ENCODE measurements at regions of chr18 and their contacts with region 1.

Region 1: DNA sequence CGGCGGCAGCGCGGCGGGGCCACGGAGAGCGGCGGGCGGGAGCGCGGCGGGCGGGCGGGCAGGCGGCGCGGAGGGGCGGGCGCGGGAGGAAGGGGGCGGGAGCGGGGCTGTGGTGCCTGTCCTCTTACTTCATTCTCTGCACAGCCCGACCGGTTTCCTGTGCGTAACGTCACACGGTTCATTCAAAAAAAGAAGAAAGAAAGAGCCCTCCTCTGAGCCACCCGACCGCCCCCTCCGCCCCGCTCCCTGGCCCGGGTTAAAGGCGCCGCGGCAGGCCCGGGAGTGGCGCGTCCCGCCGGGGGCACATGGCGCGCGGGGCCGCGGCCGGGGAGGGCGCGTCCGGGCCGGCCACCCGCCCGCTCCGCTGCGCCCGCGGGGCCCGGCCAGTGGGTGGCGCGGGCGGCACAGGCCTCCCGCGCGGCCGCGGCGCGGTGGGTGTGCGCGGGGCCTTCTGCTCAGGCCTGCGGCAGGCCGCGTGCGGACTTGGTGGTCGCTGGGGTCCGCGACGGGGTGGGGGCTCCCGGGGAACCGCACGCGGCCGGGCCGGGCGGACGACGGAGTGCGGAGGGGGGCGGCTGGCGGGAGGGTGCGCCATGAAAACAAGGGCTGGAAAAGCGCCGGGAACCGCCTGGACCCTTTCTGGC is 599 bp upstream of the BCL2 start:
- DNase-seq: peak; percentile 93
- ATAC-seq: peak; percentile 75
- H3K4me3 ChIP-seq: peak overlapping the region in 4 of 5 experiments; percentile 51 to 98 (median 88)
- H3K4me3 Mint-ChIP-seq: peak overlapping the region; percentile 95
- H3K27ac ChIP-seq: peak overlapping the region; percentile 52 to 92
- H3K27ac Mint-ChIP-seq: peak overlapping the region; percentile 96
- H3K4me1 ChIP-seq: peaks cover 18 to 34% of the 10 kb centered on the region in 2 donors
- H3K4me1 Mint-ChIP-seq: peaks cover 44% of the 10 kb centered on the region
- H3K27me3 ChIP-seq: no peaks in the 10 kb centered on the region
- H3K27me3 Mint-ChIP-seq: no peaks in the 10 kb centered on the region
- CTCF ChIP-seq: no peak

Region 2: GRCh38 chr18:62186774-62187542 is 1133.2 kb before region 1 on chr18 and contains the starts of genes PIGN and RELCH:
- CTCF ChIA-PET with region 1: no interaction called
- POLR2A ChIA-PET with region 1: no interaction called
- intact Hi-C with region 1: loop called (anchors 2 kb)
- DNase-seq: peak; percentile 98
- ATAC-seq: peak; percentile 95
- H3K4me3 ChIP-seq: peak within 1 kb of the TSS; percentile 87 to 100 (median 97)
- H3K4me3 Mint-ChIP-seq: peak within 1 kb of the TSS; percentile 98
- H3K27ac ChIP-seq: peak within 1 kb of the TSS; percentile 73
- H3K27ac Mint-ChIP-seq: peak within 1 kb of the TSS; percentile 96
- H3K4me1 ChIP-seq: peaks cover 30 to 37% of the 10 kb centered on the region in 2 donors
- H3K4me1 Mint-ChIP-seq: peaks cover 61% of the 10 kb centered on the region
- H3K27me3 ChIP-seq: no peaks in the 10 kb centered on the region
- H3K27me3 Mint-ChIP-seq: no peaks in the 10 kb centered on the region
- CTCF ChIP-seq: no peak
- total RNA-seq, gene PIGN: 37.3 and 43.8 TPM in 2 replicates
- total RNA-seq, gene RELCH: 76.0 and 77.9 TPM in 2 replicates

Region 3: DNA sequence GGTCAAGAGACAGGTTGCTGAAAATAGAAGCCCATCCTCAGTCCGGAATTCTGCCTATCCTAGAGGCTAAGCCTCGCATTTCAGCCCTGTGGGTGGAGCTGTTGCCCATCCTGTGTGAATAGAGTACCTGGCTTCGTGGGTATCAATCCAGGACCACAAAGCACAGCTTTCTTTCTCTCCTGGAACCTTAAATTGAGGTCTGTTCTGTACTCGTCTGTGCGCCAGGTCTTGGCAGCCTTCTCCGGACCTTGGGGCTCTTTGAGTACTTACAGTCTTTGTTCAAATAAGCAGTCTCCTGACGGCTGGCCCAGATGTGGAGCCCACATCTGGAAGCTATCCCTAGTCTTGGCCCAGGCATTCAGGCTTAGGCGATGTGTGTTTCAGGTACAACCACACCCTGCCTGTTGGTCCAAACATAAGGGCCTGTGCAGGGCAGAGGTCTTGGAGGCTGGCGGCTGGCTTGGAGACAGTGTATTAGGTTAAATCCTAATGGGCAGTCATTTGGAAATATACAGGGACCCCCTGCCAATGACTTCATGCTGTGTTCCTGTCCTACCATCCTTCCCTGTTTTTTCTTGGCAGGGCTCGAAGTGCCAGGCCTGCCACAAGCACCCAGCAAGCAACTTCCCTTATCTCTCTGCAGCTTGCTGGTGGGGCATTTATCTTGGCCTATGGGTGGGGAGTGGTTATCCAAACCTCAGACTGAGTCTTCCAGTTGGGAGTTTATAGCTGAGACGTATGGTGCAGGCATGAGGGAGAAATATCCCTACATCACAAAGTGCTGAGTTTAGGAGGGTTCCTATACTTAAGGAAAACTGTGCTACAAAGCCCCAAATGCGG is 294.7 kb before region 1 on chr18:
- CTCF ChIA-PET with region 1: interaction called, 26 read pairs
- POLR2A ChIA-PET with region 1: no interaction called
- intact Hi-C with region 1: no loop called
- DNase-seq: no peak
- ATAC-seq: no peak
- H3K4me3 ChIP-seq: no peak overlapping the region
- H3K4me3 Mint-ChIP-seq: no peak overlapping the region
- H3K27ac ChIP-seq: no peak overlapping the region
- H3K27ac Mint-ChIP-seq: no peak overlapping the region
- H3K4me1 ChIP-seq: peaks cover 3 to 11% of the 10 kb centered on the region in 2 donors
- H3K4me1 Mint-ChIP-seq: peaks cover 9% of the 10 kb centered on the region
- H3K27me3 ChIP-seq: no peaks in the 10 kb centered on the region
- H3K27me3 Mint-ChIP-seq: no peaks in the 10 kb centered on the region
- CTCF ChIP-seq: no peak

Region 4: DNA sequence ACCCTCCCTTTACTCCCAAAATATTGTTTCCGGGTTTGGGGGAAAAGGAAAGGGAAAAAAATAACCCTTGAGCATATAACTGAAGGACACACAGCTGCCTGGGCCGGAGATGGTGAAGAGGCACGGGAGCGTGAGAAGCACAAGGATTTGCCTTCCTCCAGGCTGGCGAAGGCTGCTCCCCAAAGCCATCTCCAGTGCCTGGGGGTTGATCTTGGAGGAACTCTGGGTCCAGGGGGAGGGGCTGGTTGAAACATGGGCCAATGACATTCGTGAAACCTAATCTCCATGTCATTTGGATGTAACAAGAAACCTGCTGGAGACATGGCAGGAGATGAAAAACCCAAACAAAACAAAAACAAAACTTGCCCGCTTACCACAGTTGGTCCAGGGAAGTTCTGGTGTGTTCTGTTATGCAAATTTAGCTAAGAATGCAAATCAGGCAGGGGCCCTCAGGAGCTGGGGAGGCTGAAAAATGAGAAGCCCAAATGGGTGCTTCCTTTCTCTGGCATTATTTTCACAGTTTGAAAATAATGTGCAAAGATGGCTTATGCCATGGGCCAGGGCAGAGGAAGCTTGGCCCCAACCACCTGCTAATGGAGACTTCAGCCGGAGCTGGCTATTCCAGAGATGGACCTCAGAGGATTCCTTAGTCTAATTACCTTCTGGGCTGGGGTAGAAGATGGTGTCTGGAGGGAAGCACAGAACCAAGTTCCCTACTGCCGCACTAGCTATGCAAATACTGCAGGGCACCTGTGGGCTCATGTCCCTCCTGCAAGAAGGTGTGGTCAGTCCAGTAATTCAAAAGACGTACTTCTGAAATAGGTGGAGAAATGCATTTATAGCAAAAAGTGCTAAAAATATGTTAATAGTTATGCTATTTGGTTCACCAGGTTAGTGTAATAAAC is 181.5 kb before region 1 on chr18:
- CTCF ChIA-PET with region 1: interaction called, 165 read pairs
- POLR2A ChIA-PET with region 1: interaction called, 6 read pairs
- intact Hi-C with region 1: loop called (anchors 1 kb)
- DNase-seq: peak; percentile 80
- ATAC-seq: peak; percentile 57
- H3K4me3 ChIP-seq: peak overlapping the region; percentile 27 to 67 (median 56)
- H3K4me3 Mint-ChIP-seq: peak overlapping the region; percentile 95
- H3K27ac ChIP-seq: peak overlapping the region; percentile 73 to 84
- H3K27ac Mint-ChIP-seq: peak overlapping the region; percentile 98
- H3K4me1 ChIP-seq: peaks cover 63 to 67% of the 10 kb centered on the region in 2 donors
- H3K4me1 Mint-ChIP-seq: peaks cover 84% of the 10 kb centered on the region
- H3K27me3 ChIP-seq: no peaks in the 10 kb centered on the region
- H3K27me3 Mint-ChIP-seq: no peaks in the 10 kb centered on the region
- CTCF ChIP-seq: no peak

Region 5: GRCh38 chr18:63207143-63207790 is 112.9 kb before region 1 on chr18:
- CTCF ChIA-PET with region 1: interaction called, 27 read pairs
- POLR2A ChIA-PET with region 1: no interaction called
- intact Hi-C with region 1: loop called (anchors 5 kb)
- DNase-seq: peak; percentile 44
- ATAC-seq: peak; percentile 55
- H3K4me3 ChIP-seq: peak overlapping the region in 2 of 5 experiments; percentile 15 to 31
- H3K4me3 Mint-ChIP-seq: peak overlapping the region; percentile 75
- H3K27ac ChIP-seq: peak overlapping the region; percentile 26 to 52
- H3K27ac Mint-ChIP-seq: peak overlapping the region; percentile 79
- H3K4me1 ChIP-seq: peaks cover 57 to 58% of the 10 kb centered on the region in 2 donors
- H3K4me1 Mint-ChIP-seq: peaks cover 80% of the 10 kb centered on the region
- H3K27me3 ChIP-seq: no peaks in the 10 kb centered on the region
- H3K27me3 Mint-ChIP-seq: no peaks in the 10 kb centered on the region
- CTCF ChIP-seq: no peak

Region 6: GRCh38 chr18:63292831-63293683 is 27.1 kb before region 1 on chr18:
- CTCF ChIA-PET with region 1: interaction called, 46 read pairs
- POLR2A ChIA-PET with region 1: interaction called, 12 read pairs
- intact Hi-C with region 1: loop called (anchors 1 kb)
- DNase-seq: peak; percentile 81
- ATAC-seq: peak; percentile 80
- H3K4me3 ChIP-seq: peak overlapping the region in 4 of 5 experiments; percentile 18 to 60 (median 46)
- H3K4me3 Mint-ChIP-seq: peak overlapping the region; percentile 79
- H3K27ac ChIP-seq: peak overlapping the region; percentile 94 to 95
- H3K27ac Mint-ChIP-seq: no peak overlapping the region
- H3K4me1 ChIP-seq: peaks cover 74 to 75% of the 10 kb centered on the region in 2 donors
- H3K4me1 Mint-ChIP-seq: peaks cover 62% of the 10 kb centered on the region
- H3K27me3 ChIP-seq: no peaks in the 10 kb centered on the region
- H3K27me3 Mint-ChIP-seq: no peaks in the 10 kb centered on the region
- CTCF ChIP-seq: no peak

Region 7: DNA sequence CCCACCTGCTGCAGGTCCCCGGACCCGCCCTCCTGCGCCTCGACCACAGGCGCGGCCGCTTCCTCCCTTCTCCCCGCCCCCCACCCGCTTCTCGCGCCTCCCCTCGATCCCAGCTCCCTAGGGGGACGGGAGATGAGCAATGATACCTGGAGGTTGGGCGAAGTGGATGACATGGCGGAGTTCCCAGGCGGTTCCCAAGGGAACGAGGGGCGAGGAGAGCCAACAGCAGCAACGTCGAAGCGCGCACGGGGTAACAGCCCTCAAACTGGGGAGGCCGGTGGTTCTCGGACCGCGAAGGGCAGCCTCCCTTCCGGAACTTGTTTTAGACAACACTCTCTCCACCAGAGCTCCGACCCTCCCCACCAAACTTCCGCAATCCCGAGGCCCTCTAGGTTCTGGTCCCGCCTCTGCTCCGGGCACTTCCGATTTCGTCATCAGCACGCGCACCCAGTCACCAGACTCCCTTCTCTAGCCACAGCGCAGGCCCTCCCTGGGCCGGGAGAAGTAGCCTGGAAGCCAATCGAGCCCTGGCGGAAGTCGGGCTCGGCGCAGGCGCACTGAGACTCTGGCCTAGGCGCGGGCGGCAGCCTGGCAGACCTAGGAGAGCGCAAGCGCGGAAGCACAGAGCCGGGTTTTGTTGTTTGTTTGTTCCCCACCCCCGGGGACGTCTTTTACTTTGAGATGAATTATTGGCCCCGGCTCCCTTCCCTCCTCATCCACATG is 102.1 kb after region 1 on chr18 and contains the start of gene VPS4B:
- CTCF ChIA-PET with region 1: no interaction called
- POLR2A ChIA-PET with region 1: no interaction called
- intact Hi-C with region 1: loop called (anchors 5 kb)
- DNase-seq: peak; percentile 100
- ATAC-seq: peak; percentile 96
- H3K4me3 ChIP-seq: peak within 1 kb of the TSS; percentile 73 to 99 (median 82)
- H3K4me3 Mint-ChIP-seq: peak within 1 kb of the TSS; percentile 99
- H3K27ac ChIP-seq: peak within 1 kb of the TSS; percentile 93 to 99
- H3K27ac Mint-ChIP-seq: peak within 1 kb of the TSS; percentile 96
- H3K4me1 ChIP-seq: peaks cover 18 to 21% of the 10 kb centered on the region in 2 donors
- H3K4me1 Mint-ChIP-seq: peaks cover 35% of the 10 kb centered on the region
- H3K27me3 ChIP-seq: no peaks in the 10 kb centered on the region
- H3K27me3 Mint-ChIP-seq: peaks cover 9% of the 10 kb centered on the region
- CTCF ChIP-seq: peak; percentile 0
- total RNA-seq, gene VPS4B: 91.5 and 93.9 TPM in 2 replicates

Measured in B cell (primary cell).